Right cardiac atrium (tissue), 5 donors: ENCODE measurements at regions of chr13 and their contacts with region 1.

Region 1: GRCh38 chr13:21130116-21130515 is 46.2 kb downstream of the SKA3 start:
- DNase-seq: no peak
- ATAC-seq: no peak
- H3K4me3 ChIP-seq: no peak overlapping the region
- H3K27ac ChIP-seq: no peak overlapping the region
- H3K4me1 ChIP-seq: no peaks in the 10 kb centered on the region
- H3K27me3 ChIP-seq: no peaks in the 10 kb centered on the region

Region 2: DNA sequence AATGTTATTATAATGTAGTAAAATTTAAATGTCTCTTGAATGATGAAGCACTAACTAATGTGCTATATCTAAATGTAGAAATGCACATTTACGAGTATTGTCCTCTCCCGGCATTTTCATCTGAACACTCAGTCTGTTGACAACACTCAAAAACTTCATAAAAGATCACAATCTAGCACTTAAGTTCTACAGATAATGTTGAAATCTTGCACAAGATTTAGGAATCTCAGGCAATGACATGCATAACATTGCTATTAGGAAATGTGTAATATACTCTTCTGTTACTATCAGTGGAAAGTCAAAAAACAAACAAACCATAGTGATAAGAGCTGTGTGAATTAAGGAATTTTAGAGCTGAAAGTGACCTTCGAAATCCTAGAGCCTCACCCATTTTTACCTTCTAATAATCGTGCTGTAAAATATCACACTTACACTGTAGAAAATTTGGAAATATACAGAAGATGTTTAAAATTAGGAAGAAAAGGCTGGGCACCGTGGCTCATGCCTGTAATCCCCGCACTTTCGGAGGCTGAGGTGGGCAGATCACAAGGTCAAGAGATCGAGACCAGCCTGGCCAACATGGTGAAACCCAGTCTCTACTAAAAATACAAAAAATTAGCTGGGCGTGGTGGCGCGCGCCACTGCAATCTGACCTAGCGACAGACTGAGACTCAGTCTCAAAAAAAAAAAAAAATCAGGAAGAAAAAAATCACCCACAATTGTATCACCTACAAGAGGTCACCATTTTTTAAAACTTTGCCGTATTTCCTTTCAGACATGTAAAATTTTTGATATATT is 189.8 kb before region 1 on chr13:
- intact Hi-C with region 1: loop called in 2 of 4 experiments (anchors 5 to 10 kb)
- DNase-seq: no peak
- ATAC-seq: no peak
- H3K4me3 ChIP-seq: no peak overlapping the region
- H3K27ac ChIP-seq: no peak overlapping the region
- H3K4me1 ChIP-seq: no peaks in the 10 kb centered on the region
- H3K27me3 ChIP-seq: no peaks in the 10 kb centered on the region

Region 3: GRCh38 chr13:21014502-21015170 is 115.5 kb before region 1 on chr13:
- intact Hi-C with region 1: no loop called
- DNase-seq: peak; percentile 51 to 81 (median 81)
- ATAC-seq: peak; percentile 74 to 80
- H3K4me3 ChIP-seq: no peak overlapping the region
- H3K27ac ChIP-seq: peak overlapping the region; percentile 72
- H3K4me1 ChIP-seq: peaks cover 25% of the 10 kb centered on the region
- H3K27me3 ChIP-seq: no peaks in the 10 kb centered on the region

Region 4: GRCh38 chr13:21075011-21075898 is 54.9 kb before region 1 on chr13:
- intact Hi-C with region 1: no loop called
- DNase-seq: peak in 2 of 3 donors; percentile 80 to 82
- ATAC-seq: peak; percentile 72 to 79
- H3K4me3 ChIP-seq: peak overlapping the region; percentile 87
- H3K27ac ChIP-seq: peak overlapping the region; percentile 59
- H3K4me1 ChIP-seq: peaks cover 2% of the 10 kb centered on the region
- H3K27me3 ChIP-seq: no peaks in the 10 kb centered on the region